CD8-positive, alpha-beta T cell (primary cell): ENCODE measurements at regions of chr12 and their contacts with region 1.

Region 1: GRCh38 chr12:101773650-101774162 is 34.4 kb upstream of the SYCP3 start:
- DNase-seq: peak; percentile 43 to 83 (median 70)
- ATAC-seq: peak; percentile 96
- H3K4me3 ChIP-seq: no peak overlapping the region
- H3K4me3 Mint-ChIP-seq: no peak overlapping the region
- H3K27ac ChIP-seq: no peak overlapping the region
- H3K27ac Mint-ChIP-seq: no peak overlapping the region
- H3K4me1 ChIP-seq: no peaks in the 10 kb centered on the region
- H3K4me1 Mint-ChIP-seq: no peaks in the 10 kb centered on the region
- H3K27me3 ChIP-seq: no peaks in the 10 kb centered on the region
- H3K27me3 Mint-ChIP-seq: no peaks in the 10 kb centered on the region
- CTCF ChIP-seq: peak; percentile 95

Region 2: GRCh38 chr12:101628676-101629075 is 145.0 kb before region 1 on chr12:
- CTCF ChIA-PET with region 1: no interaction called
- POLR2A ChIA-PET with region 1: no interaction called
- intact Hi-C with region 1: no loop called
- DNase-seq: no peak
- ATAC-seq: no peak
- H3K4me3 ChIP-seq: no peak overlapping the region
- H3K4me3 Mint-ChIP-seq: no peak overlapping the region
- H3K27ac ChIP-seq: no peak overlapping the region
- H3K27ac Mint-ChIP-seq: no peak overlapping the region
- H3K4me1 ChIP-seq: no peaks in the 10 kb centered on the region
- H3K4me1 Mint-ChIP-seq: no peaks in the 10 kb centered on the region
- H3K27me3 ChIP-seq: no peaks in the 10 kb centered on the region
- H3K27me3 Mint-ChIP-seq: peaks cover 6% of the 10 kb centered on the region
- CTCF ChIP-seq: no peak

Region 3: DNA sequence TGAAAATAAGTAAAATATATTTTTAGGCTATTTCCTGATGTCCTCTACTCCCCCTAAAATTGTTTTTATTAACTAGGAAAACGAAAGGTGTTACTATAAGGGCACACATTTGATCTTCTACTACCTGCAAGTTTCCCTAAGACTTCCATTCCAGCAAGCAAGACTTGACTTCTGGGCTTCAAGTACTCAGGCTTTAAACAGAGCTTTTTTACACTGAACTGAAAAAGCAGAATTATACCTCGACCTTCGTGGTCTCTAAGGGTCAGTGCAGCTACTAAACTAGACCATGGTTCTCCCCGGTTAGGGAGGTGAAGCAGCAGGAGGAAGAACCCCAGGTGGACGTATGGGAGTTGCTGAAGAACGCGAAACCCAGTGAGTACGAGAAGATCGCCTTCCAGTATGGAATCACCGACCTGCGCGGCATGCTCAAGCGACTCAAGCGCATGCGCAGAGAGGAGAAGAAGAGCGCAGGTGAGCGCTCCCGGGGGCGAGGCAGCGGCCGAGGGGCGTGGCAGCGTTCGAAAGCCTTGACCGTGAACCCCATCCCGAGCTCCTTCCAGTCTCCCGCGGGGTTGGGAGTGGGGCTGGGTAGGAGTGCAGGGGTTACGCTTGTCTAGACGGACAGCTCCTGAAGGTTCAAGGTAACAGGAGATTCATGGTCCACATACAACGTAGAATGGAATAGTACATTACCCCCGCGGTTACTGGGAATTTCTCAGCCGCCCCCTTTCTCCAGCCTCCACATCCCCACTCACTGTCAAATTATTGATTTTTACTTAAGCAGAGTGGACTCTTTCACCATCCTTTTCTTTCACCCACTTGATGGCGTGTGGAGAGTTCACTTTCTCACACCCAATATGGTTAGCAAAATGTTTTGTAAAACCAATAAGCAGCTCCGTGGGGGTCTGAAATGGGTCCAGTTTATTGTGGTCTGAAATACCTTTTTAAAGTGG is 131.3 kb before region 1 on chr12:
- CTCF ChIA-PET with region 1: no interaction called
- POLR2A ChIA-PET with region 1: no interaction called
- intact Hi-C with region 1: no loop called
- DNase-seq: peak in 2 of 9 experiments; percentile 8 to 24
- ATAC-seq: no peak
- H3K4me3 ChIP-seq: peak overlapping the region in 1 of 2 experiments; percentile 7
- H3K4me3 Mint-ChIP-seq: peak overlapping the region; percentile 23
- H3K27ac ChIP-seq: no peak overlapping the region
- H3K27ac Mint-ChIP-seq: no peak overlapping the region
- H3K4me1 ChIP-seq: no peaks in the 10 kb centered on the region
- H3K4me1 Mint-ChIP-seq: peaks cover 4% of the 10 kb centered on the region
- H3K27me3 ChIP-seq: peaks cover 3% of the 10 kb centered on the region in 2 experiments
- H3K27me3 Mint-ChIP-seq: peaks cover 24% of the 10 kb centered on the region
- CTCF ChIP-seq: no peak

Region 4: DNA sequence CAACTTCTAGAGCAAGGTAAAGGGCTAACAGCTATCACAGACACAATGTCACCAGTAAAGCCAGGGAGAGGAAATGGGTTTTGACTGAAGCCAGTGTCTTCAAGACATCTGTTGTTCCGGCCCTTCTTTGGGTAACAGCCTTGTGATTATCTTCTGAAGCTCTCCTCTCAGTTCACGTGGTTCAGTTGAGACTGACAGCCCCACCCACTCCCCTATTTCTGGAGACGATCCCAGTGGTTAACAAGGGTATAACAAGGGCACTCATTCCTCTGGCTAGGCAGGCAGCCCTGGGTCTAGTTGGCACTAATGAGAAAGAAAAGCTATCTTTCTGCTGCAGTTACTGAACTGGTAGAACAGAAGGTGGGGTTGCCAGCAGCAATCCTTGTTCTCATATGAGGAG is 50.2 kb after region 1 on chr12:
- CTCF ChIA-PET with region 1: interaction called, 74 read pairs
- POLR2A ChIA-PET with region 1: interaction called, 3 read pairs
- intact Hi-C with region 1: no loop called
- DNase-seq: peak; percentile 47 to 92 (median 69)
- ATAC-seq: peak; percentile 99
- H3K4me3 ChIP-seq: no peak overlapping the region
- H3K4me3 Mint-ChIP-seq: peak overlapping the region; percentile 63
- H3K27ac ChIP-seq: peak overlapping the region in 1 of 2 experiments; percentile 53
- H3K27ac Mint-ChIP-seq: peak overlapping the region; percentile 86
- H3K4me1 ChIP-seq: peaks cover 46% of the 10 kb centered on the region
- H3K4me1 Mint-ChIP-seq: peaks cover 77% of the 10 kb centered on the region
- H3K27me3 ChIP-seq: no peaks in the 10 kb centered on the region
- H3K27me3 Mint-ChIP-seq: no peaks in the 10 kb centered on the region
- CTCF ChIP-seq: peak; percentile 64

Region 5: DNA sequence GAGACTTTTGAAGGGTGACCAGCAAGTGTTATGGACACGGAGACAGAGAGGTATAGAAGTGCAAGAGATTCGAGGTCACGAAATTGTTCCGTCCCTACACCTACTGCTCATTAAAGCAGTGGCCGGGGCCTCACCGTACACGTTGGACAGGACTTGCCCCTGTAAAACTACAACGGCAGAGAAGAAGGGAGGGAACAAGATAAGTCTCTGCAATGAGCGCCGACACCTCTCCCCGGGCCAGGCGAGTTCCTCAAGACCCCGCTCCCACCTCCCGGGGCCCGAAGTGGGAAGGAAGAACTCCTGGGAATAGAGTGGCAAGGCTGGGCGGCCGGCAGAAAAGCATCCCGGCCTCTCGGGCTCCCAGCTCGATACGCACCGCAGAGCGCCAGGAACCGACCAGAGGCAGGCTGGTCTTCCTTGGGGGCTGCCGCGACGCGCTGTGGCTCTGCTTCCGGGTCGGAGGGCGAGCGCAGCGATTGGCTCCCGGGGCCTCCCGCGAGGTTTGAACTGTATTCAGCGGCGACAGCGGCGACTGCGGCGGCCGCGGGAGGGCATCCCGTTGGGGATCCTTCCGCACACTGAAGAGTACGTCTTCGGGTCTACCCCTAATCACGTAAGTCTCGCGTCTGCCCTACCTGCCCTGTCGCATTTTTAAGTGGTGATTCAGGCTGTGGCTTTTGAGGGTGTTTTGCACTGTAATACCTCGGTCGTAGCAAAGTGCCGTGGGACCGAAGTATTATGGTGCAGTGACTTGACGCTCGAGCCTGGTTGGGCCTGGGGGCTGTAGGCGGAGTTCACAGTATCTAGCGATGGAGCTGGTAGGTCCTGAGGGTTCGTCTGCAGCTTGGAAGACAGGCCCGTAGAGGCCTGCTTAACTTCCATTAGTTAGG is 346.2 kb after region 1 on chr12 and contains the starts of genes NUP37 and PARPBP:
- CTCF ChIA-PET with region 1: no interaction called
- POLR2A ChIA-PET with region 1: no interaction called
- intact Hi-C with region 1: loop called in 1 of 2 experiments (anchors 5 kb)
- DNase-seq: peak; percentile 86 to 95 (median 92)
- ATAC-seq: peak; percentile 86
- H3K4me3 ChIP-seq: peak within 1 kb of the TSS; percentile 65 to 91
- H3K4me3 Mint-ChIP-seq: peak within 1 kb of the TSS; percentile 85
- H3K27ac ChIP-seq: peak within 1 kb of the TSS; percentile 70 to 86
- H3K27ac Mint-ChIP-seq: peak within 1 kb of the TSS; percentile 95
- H3K4me1 ChIP-seq: peaks cover 14% of the 10 kb centered on the region
- H3K4me1 Mint-ChIP-seq: peaks cover 28% of the 10 kb centered on the region
- H3K27me3 ChIP-seq: no peaks in the 10 kb centered on the region
- H3K27me3 Mint-ChIP-seq: no peaks in the 10 kb centered on the region
- CTCF ChIP-seq: no peak
- total RNA-seq, gene NUP37: 8.8 to 11.3 TPM
- total RNA-seq, gene PARPBP: 1.8 to 2.4 TPM